ENCODE measurements at regions of chr3 and their contacts with region 1.

Region 1: DNA sequence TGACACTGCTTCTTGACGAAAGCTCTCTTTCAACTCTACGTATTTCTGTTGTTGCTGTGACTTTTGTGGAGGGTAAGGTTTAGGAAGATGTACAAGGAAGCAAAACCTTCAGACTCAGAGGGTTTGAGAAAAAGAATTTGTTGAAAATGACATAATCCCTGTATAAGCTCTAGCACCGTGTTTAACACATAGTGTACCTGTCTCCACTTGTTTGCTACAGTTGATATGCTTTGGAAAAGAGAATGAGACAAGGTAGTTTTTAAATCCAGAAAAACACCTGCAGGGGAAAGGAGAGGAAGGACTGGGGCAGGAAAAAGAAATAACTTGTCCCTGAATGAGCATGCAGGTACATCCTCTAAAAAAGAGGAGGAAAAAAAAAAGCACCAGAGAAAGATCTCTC is 29.6 kb upstream of the CP start:
- DNase-seq: no peak
- ATAC-seq: no peak
- H3K4me3 Mint-ChIP-seq: no peak overlapping the region
- H3K27ac Mint-ChIP-seq: no peak overlapping the region
- H3K4me1 Mint-ChIP-seq: peaks cover 20% of the 10 kb centered on the region
- H3K27me3 Mint-ChIP-seq: peaks cover 10% of the 10 kb centered on the region
- CTCF ChIP-seq: no peak

Region 2: DNA sequence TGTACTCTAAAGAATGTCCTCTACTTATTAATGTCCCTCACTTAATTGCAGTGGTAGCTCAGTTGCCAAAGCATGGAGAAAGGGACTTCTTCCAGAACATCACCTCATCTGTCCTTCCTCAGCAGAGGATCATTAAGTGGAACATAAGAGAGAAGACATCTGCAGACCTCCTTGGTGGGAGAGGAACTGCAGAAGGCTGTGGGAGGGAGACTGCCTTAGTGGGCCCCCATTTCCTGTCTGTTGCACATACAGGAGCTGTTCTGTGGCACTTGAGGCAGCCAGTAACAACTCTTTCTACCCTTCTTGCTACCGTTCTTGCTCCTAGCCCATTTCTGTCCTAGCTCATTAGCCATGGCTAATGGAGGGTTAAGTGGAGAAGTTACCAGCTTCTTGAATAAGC is 88.1 kb before region 1 on chr3:
- CTCF ChIA-PET with region 1: no interaction called
- POLR2A ChIA-PET with region 1: no interaction called
- intact Hi-C with region 1: no loop called
- DNase-seq: peak; percentile 6
- ATAC-seq: peak; percentile 51
- H3K4me3 Mint-ChIP-seq: no peak overlapping the region
- H3K27ac Mint-ChIP-seq: no peak overlapping the region
- H3K4me1 Mint-ChIP-seq: peaks cover 10% of the 10 kb centered on the region
- H3K27me3 Mint-ChIP-seq: no peaks in the 10 kb centered on the region
- CTCF ChIP-seq: no peak

Region 3: DNA sequence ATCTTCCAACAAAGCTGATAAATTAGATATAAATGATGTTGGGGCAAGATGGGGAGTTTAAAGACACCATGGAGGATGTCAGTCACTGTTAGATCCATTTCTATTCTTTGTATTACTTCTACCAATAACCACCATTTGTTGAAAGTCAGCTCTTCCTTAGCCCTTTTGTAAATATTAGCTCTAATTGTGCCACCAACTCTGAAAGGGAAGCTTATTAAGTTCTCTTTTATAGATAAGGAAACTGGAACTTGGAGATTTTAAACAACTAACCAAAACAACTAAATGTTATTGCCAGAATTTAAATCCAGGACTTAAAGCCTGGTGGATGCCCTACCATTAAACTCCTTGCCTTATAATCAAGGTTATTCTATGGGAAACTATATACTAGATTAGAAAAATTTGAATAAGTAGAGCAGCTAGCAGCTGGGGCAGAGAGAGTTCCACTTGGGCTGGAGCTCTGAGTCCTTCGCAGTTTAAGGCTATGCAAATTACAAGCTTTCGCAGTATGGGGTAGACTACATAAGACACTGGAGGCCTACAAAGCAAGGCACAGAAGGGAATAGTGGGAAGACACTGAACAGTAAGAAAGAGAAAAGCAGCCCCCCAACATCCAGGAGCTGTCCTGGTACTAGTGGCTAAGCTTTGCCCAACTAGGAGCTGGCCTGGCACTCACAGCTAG is 29.6 kb after region 1 on chr3:
- CTCF ChIA-PET with region 1: interaction called, 5 read pairs
- POLR2A ChIA-PET with region 1: no interaction called
- intact Hi-C with region 1: loop called (anchors 2 kb)
- DNase-seq: no peak
- ATAC-seq: no peak
- H3K4me3 Mint-ChIP-seq: no peak overlapping the region
- H3K27ac Mint-ChIP-seq: no peak overlapping the region
- H3K4me1 Mint-ChIP-seq: peaks cover 10% of the 10 kb centered on the region
- H3K27me3 Mint-ChIP-seq: no peaks in the 10 kb centered on the region
- CTCF ChIP-seq: no peak

Measured in activated CD8-positive, alpha-beta T cell treated with anti-CD3 and anti-CD28 coated beads for 36 hours (primary cell).